B cell (primary cell): ENCODE measurements at regions of chrX and their contacts with region 1.

Region 1: DNA sequence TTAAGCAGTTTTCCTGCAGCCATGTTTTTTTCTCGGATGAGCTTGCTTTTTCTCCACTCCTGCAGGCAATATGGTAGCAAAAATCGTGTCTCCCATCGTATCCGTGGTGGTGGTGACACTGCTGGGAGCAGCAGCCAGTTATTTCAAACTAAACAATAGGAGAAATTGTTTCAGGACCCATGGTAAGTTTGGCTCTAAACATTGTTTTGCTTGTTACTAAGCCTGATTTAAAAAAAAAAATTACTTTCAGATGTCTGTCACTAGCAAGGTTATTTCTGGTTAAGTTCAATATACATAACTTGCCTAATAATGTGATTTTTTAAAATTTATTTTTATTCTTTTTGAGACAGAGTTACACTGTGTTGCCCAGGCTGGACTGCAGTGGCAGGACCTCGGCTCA is 17.5 kb upstream of the GYG2 start:
- DNase-seq: no peak
- ATAC-seq: no peak
- H3K4me3 ChIP-seq: no peak overlapping the region
- H3K4me3 Mint-ChIP-seq: no peak overlapping the region
- H3K27ac ChIP-seq: no peak overlapping the region
- H3K27ac Mint-ChIP-seq: no peak overlapping the region
- H3K4me1 ChIP-seq: peaks cover 3% of the 10 kb centered on the region in 2 donors
- H3K4me1 Mint-ChIP-seq: no peaks in the 10 kb centered on the region
- H3K27me3 ChIP-seq: peaks cover 0 to 3% (median 0%) of the 10 kb centered on the region in 4 experiments
- H3K27me3 Mint-ChIP-seq: peaks cover 9% of the 10 kb centered on the region
- CTCF ChIP-seq: no peak

Region 2: GRCh38 chrX:2643880-2644279 is 167.4 kb before region 1 on chrX:
- CTCF ChIA-PET with region 1: no interaction called
- POLR2A ChIA-PET with region 1: no interaction called
- intact Hi-C with region 1: loop called (anchors 1 kb)
- DNase-seq: no peak
- ATAC-seq: no peak
- H3K4me3 ChIP-seq: no peak overlapping the region
- H3K4me3 Mint-ChIP-seq: no peak overlapping the region
- H3K27ac ChIP-seq: no peak overlapping the region
- H3K27ac Mint-ChIP-seq: no peak overlapping the region
- H3K4me1 ChIP-seq: no peaks in the 10 kb centered on the region
- H3K4me1 Mint-ChIP-seq: no peaks in the 10 kb centered on the region
- H3K27me3 ChIP-seq: no peaks in the 10 kb centered on the region
- H3K27me3 Mint-ChIP-seq: no peaks in the 10 kb centered on the region
- CTCF ChIP-seq: no peak

Region 3: DNA sequence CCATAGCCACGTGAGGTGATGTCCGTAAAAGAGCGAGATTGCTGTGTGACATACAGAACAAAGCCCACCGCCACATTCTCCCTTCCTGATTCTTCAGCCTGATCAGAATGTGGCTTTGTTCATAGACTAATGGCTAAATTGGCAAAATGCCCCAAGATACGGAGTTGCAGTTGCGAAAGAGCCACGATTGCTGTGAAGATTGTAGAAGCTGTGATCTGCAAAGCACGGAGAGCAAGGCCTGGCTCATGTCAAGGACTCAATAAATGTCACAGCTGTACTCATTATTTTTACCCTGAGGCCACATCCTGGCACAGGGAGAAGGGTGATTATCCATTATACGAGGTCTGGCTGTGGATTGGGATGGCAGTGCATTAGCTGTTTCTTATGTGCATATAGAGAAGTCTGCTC is 83.6 kb after region 1 on chrX:
- CTCF ChIA-PET with region 1: no interaction called
- POLR2A ChIA-PET with region 1: no interaction called
- intact Hi-C with region 1: no loop called
- DNase-seq: no peak
- ATAC-seq: no peak
- H3K4me3 ChIP-seq: no peak overlapping the region
- H3K4me3 Mint-ChIP-seq: no peak overlapping the region
- H3K27ac ChIP-seq: no peak overlapping the region
- H3K27ac Mint-ChIP-seq: no peak overlapping the region
- H3K4me1 ChIP-seq: peaks cover 4 to 7% of the 10 kb centered on the region in 2 donors
- H3K4me1 Mint-ChIP-seq: peaks cover 11% of the 10 kb centered on the region
- H3K27me3 ChIP-seq: no peaks in the 10 kb centered on the region
- H3K27me3 Mint-ChIP-seq: no peaks in the 10 kb centered on the region
- CTCF ChIP-seq: no peak